BJ (cell line): ENCODE measurements at regions of chr17 and their contacts with region 1.

Region 1: GRCh38 chr17:76506408-76507349 is 5.5 kb upstream of the RHBDF2 start:
- DNase-seq: no peak
- H3K4me3 ChIP-seq: no peak overlapping the region
- H3K27me3 ChIP-seq: peaks cover 8% of the 10 kb centered on the region
- CTCF ChIP-seq: peak; percentile 89

Region 2: GRCh38 chr17:76408052-76408849 is 98.4 kb before region 1 on chr17:
- CTCF ChIA-PET with region 1: interaction called, 16 read pairs
- POLR2A ChIA-PET with region 1: no interaction called
- DNase-seq: no peak
- H3K4me3 ChIP-seq: no peak overlapping the region
- H3K27me3 ChIP-seq: no peaks in the 10 kb centered on the region
- CTCF ChIP-seq: peak; percentile 91

Region 3: GRCh38 chr17:76479515-76480060 is 27.1 kb before region 1 on chr17:
- CTCF ChIA-PET with region 1: interaction called, 14 read pairs
- POLR2A ChIA-PET with region 1: no interaction called
- DNase-seq: no peak
- H3K4me3 ChIP-seq: no peak overlapping the region
- H3K27me3 ChIP-seq: no peaks in the 10 kb centered on the region
- CTCF ChIP-seq: no peak

Region 4: GRCh38 chr17:76523084-76524037 is 16.7 kb after region 1 on chr17:
- CTCF ChIA-PET with region 1: interaction called, 64 read pairs
- POLR2A ChIA-PET with region 1: no interaction called
- DNase-seq: no peak
- H3K4me3 ChIP-seq: no peak overlapping the region
- H3K27me3 ChIP-seq: no peaks in the 10 kb centered on the region
- CTCF ChIP-seq: peak; percentile 100

Region 5: DNA sequence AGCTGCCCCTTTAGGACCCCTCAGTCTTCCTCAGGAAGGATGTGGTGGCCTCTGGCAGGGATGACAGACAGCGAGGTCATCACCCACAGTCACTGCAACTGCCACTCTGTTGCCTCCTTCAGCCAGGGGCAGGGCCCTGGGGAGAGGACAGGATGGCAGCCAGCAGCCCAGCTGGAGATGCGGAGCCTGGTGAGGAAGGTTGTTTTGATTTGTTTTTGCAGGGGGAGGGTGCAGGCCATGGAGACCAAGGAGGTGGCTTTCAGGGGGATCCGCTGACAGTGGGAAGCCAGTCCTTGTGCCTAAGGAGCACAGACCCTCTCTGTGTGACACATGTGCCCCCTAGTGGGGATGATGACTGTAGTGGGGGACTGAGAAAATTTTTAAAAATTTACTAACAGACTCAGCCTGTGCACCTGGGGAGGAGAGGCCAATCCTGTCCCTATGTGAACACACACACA is 40.5 kb after region 1 on chr17:
- CTCF ChIA-PET with region 1: interaction called, 15 read pairs
- POLR2A ChIA-PET with region 1: no interaction called
- DNase-seq: no peak
- H3K4me3 ChIP-seq: no peak overlapping the region
- H3K27me3 ChIP-seq: 0 out of 2 replicates have a peak, but pooled peaks cover 3% of the 10 kb centered on the region
- CTCF ChIP-seq: peak; percentile 80